Mammary epithelial cell (primary cell): ENCODE measurements at regions of chr3 and their contacts with region 1.

Region 1: GRCh38 chr3:12135029-12135657 is 23.6 kb downstream of the TIMP4 start:
- DNase-seq: peak; percentile 39
- H3K4me3 ChIP-seq: no peak overlapping the region
- H3K27ac ChIP-seq: no peak overlapping the region
- H3K4me1 ChIP-seq: no peaks in the 10 kb centered on the region
- H3K27me3 ChIP-seq: peaks cover 8% of the 10 kb centered on the region
- CTCF ChIP-seq: peak; percentile 95

Region 2: DNA sequence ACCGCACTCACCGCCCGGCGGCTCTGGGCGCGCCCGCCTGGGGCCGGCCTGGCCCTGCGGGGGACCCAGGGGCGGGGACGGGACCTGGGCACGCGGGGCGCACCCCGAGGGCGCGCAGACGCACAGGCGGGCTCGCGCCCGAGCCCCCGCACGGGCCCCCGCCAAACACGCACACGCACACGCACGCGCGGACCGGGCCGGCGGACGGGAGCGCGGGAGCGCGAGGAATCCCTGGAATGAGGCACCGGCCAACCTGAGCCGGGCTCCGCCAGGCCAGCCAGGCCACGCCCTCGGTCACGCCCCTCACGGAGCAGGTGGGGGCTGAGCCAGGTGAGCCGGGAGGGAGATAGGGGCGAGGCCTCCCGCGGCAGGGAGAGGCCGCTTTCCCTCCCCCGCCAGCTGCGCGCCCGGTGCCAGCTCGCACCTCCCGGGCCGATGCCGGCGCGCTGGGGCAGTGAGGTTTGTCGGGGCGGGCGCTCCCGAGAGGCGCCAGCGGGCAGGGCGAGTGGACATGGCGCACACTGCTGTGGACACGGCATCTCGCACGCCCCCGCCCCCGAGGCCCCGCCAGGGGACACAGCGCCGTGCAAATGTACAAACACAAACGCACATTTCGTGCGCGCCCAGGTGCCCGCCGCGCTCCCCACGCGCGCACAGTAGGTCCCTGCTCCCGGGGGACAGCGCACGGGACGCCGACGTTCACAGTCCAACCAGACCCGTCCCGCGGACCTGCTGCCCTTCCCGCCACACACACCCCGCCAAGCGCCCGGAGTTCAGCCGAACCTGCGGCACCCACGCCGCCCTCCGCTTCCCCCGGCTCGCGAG is 415.5 kb before region 1 on chr3:
- CTCF ChIA-PET with region 1: no interaction called
- dilution Hi-C with region 1: no loop called
- in situ Hi-C with region 1: no loop called
- intact Hi-C with region 1: no loop called
- DNase-seq: peak; percentile 94
- H3K4me3 ChIP-seq: peak overlapping the region; percentile 71 to 95 (median 83)
- H3K27ac ChIP-seq: peak overlapping the region; percentile 93
- H3K4me1 ChIP-seq: peaks cover 22% of the 10 kb centered on the region
- H3K27me3 ChIP-seq: no peaks in the 10 kb centered on the region
- CTCF ChIP-seq: no peak

Region 3: GRCh38 chr3:11944052-11944673 is 191.0 kb before region 1 on chr3:
- CTCF ChIA-PET with region 1: no interaction called
- dilution Hi-C with region 1: no loop called
- in situ Hi-C with region 1: no loop called
- intact Hi-C with region 1: loop called (anchors 5 kb)
- DNase-seq: peak; percentile 30
- H3K4me3 ChIP-seq: no peak overlapping the region
- H3K27ac ChIP-seq: no peak overlapping the region
- H3K4me1 ChIP-seq: no peaks in the 10 kb centered on the region
- H3K27me3 ChIP-seq: no peaks in the 10 kb centered on the region
- CTCF ChIP-seq: peak; percentile 74 to 86

Region 4: GRCh38 chr3:12349895-12350813 is 215.0 kb after region 1 on chr3:
- CTCF ChIA-PET with region 1: no interaction called
- dilution Hi-C with region 1: no loop called
- in situ Hi-C with region 1: no loop called
- intact Hi-C with region 1: loop called (anchors 5 kb)
- DNase-seq: no peak
- H3K4me3 ChIP-seq: no peak overlapping the region
- H3K27ac ChIP-seq: no peak overlapping the region
- H3K4me1 ChIP-seq: peaks cover 8% of the 10 kb centered on the region
- H3K27me3 ChIP-seq: no peaks in the 10 kb centered on the region
- CTCF ChIP-seq: no peak

Region 5: DNA sequence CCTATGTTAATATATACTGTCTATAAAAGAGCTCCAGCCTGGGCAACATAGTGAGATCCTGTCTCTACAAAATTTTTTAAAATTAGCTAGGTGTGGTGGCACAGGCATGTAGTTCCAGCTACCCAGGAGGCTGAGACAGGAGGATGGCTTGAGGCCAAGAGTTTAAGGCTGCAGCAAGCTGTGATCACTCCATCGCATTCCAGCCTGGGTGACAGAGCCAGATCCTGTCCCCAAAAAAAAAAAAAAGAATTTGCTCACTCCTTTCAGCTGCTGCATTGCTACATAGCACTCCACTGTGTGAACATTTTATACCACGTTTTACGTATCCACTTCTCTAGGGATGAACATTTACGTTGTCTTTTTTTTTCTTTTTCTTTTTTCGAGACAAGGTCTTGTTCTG is 343.2 kb after region 1 on chr3:
- CTCF ChIA-PET with region 1: interaction called, 13 read pairs
- dilution Hi-C with region 1: loop called (anchors 25 kb)
- in situ Hi-C with region 1: loop called (anchors 5 kb)
- intact Hi-C with region 1: loop called (anchors 1 kb)
- DNase-seq: no peak
- H3K4me3 ChIP-seq: no peak overlapping the region
- H3K27ac ChIP-seq: no peak overlapping the region
- H3K4me1 ChIP-seq: peaks cover under 1% of the 10 kb centered on the region
- H3K27me3 ChIP-seq: no peaks in the 10 kb centered on the region
- CTCF ChIP-seq: no peak

Region 6: DNA sequence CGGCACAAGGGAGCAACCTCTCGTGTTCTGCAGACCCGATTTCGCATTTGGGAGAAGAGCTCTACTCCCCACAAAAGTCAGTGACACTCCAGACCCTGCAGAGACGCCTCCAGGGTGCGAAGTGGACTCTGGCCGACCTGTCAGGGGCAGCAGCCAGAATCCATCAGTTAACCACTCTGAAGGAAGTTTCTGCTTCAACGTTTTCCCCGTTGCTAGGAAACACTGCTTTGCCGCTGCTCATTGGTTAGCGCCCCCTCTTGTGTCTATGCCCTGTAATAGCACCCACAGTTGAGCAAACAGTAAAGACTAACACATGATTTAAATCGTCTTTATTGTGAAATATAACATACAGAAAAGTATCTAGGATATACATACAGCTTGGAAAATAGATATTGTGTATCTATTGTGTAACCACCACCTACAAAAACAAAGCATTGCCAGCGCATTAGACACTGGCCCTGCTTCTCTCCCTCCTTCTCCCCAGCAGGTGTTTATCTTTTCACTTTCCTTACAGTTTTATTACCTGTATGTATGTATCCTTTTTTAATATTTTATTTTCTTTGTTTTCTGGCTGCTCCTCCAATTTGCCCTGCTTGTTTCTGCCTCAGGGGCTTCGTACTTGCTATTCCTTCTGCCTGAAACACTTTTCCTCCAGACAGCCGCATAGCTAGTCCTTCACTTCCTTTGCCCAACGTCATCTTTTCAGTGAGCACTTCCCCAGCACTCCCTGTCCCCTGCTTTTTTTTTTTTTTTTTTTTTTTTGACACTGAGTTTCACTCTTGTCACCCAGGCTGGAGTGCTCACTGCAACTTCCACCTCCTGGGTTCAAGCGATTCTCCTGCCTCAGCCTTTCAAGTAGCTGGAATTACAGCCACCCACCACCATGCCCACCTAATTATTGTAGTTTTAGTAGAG is 585.1 kb after region 1 on chr3:
- CTCF ChIA-PET with region 1: no interaction called
- dilution Hi-C with region 1: no loop called
- in situ Hi-C with region 1: no loop called
- intact Hi-C with region 1: loop called (anchors 10 kb)
- DNase-seq: peak; percentile 72
- H3K4me3 ChIP-seq: peak overlapping the region; percentile 17 to 24 (median 24)
- H3K27ac ChIP-seq: no peak overlapping the region
- H3K4me1 ChIP-seq: peaks cover 4% of the 10 kb centered on the region
- H3K27me3 ChIP-seq: no peaks in the 10 kb centered on the region
- CTCF ChIP-seq: peak; percentile 97 to 98